Right ventricle myocardium superior (tissue), 1 donor: ENCODE measurements at regions of chr2 and their contacts with region 1.

Region 1: DNA sequence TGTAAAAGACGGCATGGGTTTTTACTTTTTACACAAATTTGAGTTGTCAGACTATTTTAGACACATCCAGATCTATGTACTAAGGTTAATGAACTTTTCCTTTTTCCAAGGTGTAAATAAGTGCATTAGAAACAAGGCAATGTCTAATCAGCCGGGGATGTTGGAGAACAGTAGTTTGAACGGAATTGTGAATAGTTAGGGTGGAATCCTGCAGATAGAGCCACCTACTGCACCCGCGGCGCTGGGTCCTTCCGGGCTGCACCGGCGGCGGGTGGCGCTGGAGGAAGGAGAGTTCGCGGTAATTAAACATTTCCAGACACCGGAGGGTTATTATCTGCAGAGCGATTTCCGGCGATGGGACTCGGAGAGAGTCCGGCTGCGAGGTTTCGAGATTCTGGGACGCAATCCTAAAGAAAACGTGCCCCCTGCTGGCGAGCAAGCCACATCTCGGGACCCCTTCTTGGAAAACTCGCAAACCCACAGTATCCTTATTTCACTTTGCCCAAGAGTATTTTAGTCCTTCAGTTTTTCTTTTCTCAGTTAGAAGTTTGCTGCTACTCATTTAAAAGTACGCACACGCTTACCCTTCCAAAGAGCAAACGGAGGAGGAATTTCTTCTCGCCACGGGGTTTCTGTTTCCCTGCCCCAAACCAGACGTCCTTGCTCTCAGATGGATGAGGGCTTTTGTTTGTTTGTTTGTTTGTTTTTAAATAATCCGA is 4.5 kb upstream of the OSR1 start:
- DNase-seq: peak; percentile 84
- ATAC-seq: peak; percentile 65

Region 2: GRCh38 chr2:18435421-18436037 is 927.4 kb before region 1 on chr2:
- intact Hi-C with region 1: loop called (anchors 10 kb)
- DNase-seq: no peak
- ATAC-seq: peak; percentile 61

Region 3: DNA sequence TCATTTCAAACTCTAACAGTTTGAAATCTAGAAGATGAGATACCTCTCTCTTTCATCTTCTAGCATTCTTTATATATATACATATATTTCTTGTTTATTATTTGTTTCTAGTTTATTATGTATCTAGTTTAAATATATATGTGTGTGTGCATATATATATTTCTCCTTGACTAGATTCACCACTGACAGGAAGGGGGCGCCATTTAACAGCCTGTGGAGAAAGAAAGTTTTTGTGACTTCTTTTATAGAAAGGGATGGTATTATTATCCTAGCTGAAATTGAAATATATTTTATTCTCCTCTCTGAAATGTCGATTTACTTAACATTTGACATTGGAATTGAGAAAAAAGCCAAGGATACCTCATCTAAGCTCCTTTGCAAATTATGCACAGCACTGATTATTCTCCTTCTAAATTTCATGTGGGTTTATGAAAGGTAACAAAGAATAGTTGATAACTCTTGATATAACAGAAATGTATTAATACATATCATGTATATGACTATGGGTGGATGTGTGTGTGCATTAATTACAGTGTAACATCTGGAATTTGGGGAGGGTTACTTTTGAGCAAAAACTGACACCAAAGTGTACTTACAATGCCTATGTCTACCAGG is 612.9 kb before region 1 on chr2:
- intact Hi-C with region 1: loop called (anchors 5 kb)
- DNase-seq: no peak
- ATAC-seq: peak; percentile 68

Region 4: DNA sequence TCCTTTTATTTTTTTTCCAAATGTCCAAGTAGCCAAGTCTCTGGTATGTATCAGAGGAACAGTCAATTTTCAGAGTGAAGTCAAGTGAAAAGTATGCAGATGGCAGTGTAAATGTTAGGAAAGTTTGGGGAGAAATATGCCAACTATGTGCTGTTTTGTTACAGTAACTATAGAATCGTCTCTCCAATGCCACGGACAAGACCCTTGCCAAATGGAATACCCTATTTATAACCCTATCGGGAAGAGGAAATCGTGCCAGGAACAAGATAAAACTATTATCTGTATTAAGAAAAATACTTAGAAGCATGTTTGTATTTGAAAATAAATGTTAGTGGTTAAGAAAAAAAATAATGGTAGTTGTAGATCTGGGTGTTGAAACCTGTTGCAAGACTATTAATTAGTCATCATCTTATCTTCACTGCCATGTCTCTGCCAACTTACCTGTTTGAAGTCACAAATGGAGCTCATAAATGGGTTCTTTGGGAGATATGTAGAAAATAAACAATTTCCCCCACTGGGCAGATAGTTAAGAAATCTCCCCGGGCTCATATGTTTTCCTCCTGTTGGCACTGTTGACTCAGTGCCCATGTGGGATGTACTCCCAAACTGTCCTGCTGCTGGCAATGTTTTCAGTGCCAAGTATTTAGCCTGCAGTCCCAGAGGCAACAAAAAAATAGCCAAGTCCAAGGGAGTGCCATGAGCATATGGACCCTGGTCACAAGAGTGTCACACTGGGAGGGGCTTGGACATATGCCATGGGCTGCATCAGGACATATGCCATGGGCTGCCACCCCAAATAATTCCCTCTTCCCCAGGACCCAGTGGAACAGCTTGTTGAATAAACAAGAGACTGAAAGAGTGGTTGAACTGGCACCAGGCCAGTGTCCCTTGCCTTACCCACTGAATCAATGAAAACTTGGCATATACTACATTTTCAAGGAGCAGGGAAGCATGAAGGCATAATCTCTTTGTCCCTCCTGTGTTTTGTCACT is 371.4 kb before region 1 on chr2:
- intact Hi-C with region 1: loop called (anchors 10 kb)
- DNase-seq: peak; percentile 57
- ATAC-seq: peak; percentile 81